GM10248 (cell line): ENCODE measurements at regions of chr6 and their contacts with region 1.

Region 1: GRCh38 chr6:34459899-34460593 is 5.8 kb upstream of the PACSIN1 start:
- DNase-seq: peak; percentile 76
- CTCF ChIP-seq: peak; percentile 75

Region 2: GRCh38 chr6:34447910-34448309 is 12.1 kb before region 1 on chr6:
- CTCF ChIA-PET with region 1: interaction called, 15 read pairs
- POLR2A ChIA-PET with region 1: no interaction called
- DNase-seq: no peak
- CTCF ChIP-seq: no peak

Region 3: DNA sequence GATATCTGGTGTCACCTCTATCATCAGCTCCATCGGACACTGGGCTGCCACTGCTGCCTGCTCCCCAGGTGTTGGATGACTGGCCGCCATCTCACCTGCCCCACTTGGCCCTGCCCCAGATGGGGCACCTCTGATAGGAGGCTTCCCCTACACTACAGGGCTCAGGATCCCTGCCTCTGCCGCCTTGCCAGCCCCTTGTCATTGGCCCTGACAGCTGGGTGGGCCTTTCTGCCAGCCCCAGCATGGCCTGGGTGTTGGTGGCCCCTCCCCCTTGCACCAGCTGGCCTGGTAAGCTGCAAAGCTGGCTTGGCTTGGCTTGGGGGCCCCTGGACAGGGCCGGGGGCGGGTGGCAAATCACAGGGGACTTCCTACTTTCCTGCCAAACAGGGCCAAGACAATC is 16.4 kb after region 1 on chr6:
- CTCF ChIA-PET with region 1: interaction called, 14 read pairs
- POLR2A ChIA-PET with region 1: no interaction called
- DNase-seq: no peak
- CTCF ChIP-seq: no peak